ENCODE measurements at regions of chr3 and their contacts with region 1.

Region 1: DNA sequence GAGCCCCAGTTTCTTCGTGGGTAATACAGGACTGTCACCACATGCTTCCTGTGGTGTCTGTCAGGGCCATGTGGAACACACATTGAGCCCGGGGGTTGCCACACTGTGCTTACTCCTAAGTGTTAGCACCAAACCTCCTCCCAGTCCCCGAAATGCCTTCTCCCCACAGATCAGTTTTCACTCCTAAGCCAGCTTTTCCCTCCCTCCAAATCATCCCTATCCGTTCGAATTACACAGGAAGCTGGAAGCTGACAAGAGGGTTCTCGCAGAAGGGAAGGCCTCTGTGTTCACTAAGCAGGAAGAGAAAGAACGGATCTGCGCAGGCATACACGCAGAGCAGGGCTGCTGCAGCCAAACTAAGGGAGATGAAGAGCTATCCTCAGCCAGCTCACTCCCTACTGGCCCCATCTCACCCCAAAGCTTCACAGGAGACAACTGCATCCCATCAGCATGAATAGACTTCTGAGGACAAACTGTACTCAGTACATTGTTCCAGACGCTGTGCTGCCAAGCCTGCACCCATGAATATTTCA is 32.3 kb downstream of the XXYLT1 start:
- DNase-seq: no peak
- H3K4me3 ChIP-seq: no peak overlapping the region
- H3K27me3 ChIP-seq: no peaks in the 10 kb centered on the region
- CTCF ChIP-seq: no peak

Region 2: DNA sequence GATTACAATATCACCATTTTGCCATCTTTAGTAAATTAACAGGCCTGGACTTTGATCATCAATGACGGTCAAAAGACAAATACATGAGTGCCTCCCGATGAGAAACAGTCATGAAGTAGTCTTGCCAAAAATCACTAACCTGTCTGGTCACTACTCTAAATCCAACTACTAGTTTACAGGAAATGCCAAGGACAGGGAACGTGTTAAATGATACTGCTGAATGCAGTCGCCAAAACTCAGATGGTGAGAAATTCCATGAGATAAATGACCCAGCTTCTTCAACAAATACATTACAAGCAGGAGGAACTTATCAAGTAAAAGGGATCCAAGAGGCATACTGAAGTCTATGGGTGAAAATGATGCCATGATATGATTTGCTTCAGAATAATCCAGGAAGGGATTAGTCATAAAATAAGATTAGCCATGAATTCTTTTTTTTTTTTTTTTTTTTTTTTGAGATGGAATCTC is 716.0 kb before region 1 on chr3:
- CTCF ChIA-PET with region 1: no interaction called
- POLR2A ChIA-PET with region 1: interaction called, 14 read pairs
- DNase-seq: no peak
- H3K4me3 ChIP-seq: no peak overlapping the region
- H3K27me3 ChIP-seq: no peaks in the 10 kb centered on the region
- CTCF ChIP-seq: no peak

Region 3: GRCh38 chr3:195475614-195476013 is 237.0 kb after region 1 on chr3:
- CTCF ChIA-PET with region 1: no interaction called
- POLR2A ChIA-PET with region 1: no interaction called
- DNase-seq: no peak
- H3K4me3 ChIP-seq: no peak overlapping the region
- H3K27me3 ChIP-seq: peaks cover 1% of the 10 kb centered on the region; the same call in 1 of the 2 replicates
- CTCF ChIP-seq: no peak

Measured in BJ (cell line).